ENCODE measurements at regions of chr2 and their contacts with region 1.

Region 1: GRCh38 chr2:37832590-37833197 is 92.4 kb upstream of the RMDN2 start:
- DNase-seq: peak; percentile 89
- H3K4me3 Mint-ChIP-seq: no peak overlapping the region
- H3K27ac Mint-ChIP-seq: no peak overlapping the region
- H3K4me1 Mint-ChIP-seq: peaks cover 5% of the 10 kb centered on the region
- H3K27me3 Mint-ChIP-seq: no peaks in the 10 kb centered on the region
- CTCF ChIP-seq: peak; percentile 79

Region 2: GRCh38 chr2:37287966-37288365 is 544.7 kb before region 1 on chr2:
- CTCF ChIA-PET with region 1: interaction called, 4 read pairs
- POLR2A ChIA-PET with region 1: no interaction called
- intact Hi-C with region 1: loop called (anchors 5 kb)
- DNase-seq: peak; percentile 47
- H3K4me3 Mint-ChIP-seq: no peak overlapping the region
- H3K27ac Mint-ChIP-seq: no peak overlapping the region
- H3K4me1 Mint-ChIP-seq: peaks cover 12% of the 10 kb centered on the region
- H3K27me3 Mint-ChIP-seq: no peaks in the 10 kb centered on the region
- CTCF ChIP-seq: peak; percentile 24

Region 3: DNA sequence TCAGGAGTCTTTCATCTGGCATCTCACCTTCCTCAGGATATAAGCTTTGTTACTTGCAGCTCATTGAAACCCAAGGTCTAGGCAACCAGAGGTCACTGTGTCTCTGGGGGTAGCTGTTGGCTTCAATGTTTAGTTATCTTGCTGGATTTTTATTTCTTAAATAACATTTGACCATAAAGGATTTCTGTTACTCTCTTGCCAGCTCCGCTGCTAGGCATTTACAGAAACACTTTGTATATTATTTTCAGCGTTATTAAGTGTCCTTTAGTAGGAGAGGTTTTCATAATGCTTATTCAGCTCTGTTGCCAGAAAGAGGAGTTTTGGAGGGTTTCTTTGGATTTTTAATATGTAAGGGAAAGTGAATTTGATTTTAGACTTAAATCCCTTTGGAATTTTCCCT is 426.9 kb before region 1 on chr2:
- CTCF ChIA-PET with region 1: interaction called, 103 read pairs
- POLR2A ChIA-PET with region 1: no interaction called
- intact Hi-C with region 1: no loop called
- DNase-seq: no peak
- H3K4me3 Mint-ChIP-seq: no peak overlapping the region
- H3K27ac Mint-ChIP-seq: no peak overlapping the region
- H3K4me1 Mint-ChIP-seq: no peaks in the 10 kb centered on the region
- H3K27me3 Mint-ChIP-seq: no peaks in the 10 kb centered on the region
- CTCF ChIP-seq: no peak

Region 4: DNA sequence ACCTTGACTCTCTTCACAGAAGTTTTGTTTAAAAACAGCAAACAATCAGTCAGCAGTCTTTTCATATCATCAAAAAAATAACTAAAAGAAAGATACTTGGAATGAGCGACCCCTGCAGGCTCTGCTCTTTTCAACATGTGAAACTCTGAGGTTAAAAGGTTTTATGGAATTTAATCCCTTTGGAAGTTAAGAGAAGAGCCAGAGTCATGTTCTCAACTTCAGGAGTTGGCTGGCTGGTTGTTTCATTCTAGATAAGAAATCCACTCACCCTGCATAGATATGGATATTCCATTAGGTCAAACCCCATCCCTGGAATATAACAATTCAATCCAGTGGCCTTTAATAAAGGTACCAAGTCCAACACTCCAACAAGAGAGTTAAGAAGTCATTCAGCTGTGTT is 23.2 kb before region 1 on chr2:
- CTCF ChIA-PET with region 1: interaction called, 4 read pairs
- POLR2A ChIA-PET with region 1: no interaction called
- intact Hi-C with region 1: loop called (anchors 1 kb)
- DNase-seq: peak; percentile 65
- H3K4me3 Mint-ChIP-seq: no peak overlapping the region
- H3K27ac Mint-ChIP-seq: no peak overlapping the region
- H3K4me1 Mint-ChIP-seq: no peaks in the 10 kb centered on the region
- H3K27me3 Mint-ChIP-seq: no peaks in the 10 kb centered on the region
- CTCF ChIP-seq: peak; percentile 49